ENCODE measurements at regions of chr1 and their contacts with region 1.

Region 1: GRCh38 chr1:156445789-156446263 is 54.7 kb downstream of the MEF2D start:
- DNase-seq: peak; percentile 92

Region 2: GRCh38 chr1:156245451-156246232 is 200.2 kb before region 1 on chr1:
- CTCF ChIA-PET with region 1: no interaction called
- POLR2A ChIA-PET with region 1: no interaction called
- DNase-seq: no peak

Region 3: DNA sequence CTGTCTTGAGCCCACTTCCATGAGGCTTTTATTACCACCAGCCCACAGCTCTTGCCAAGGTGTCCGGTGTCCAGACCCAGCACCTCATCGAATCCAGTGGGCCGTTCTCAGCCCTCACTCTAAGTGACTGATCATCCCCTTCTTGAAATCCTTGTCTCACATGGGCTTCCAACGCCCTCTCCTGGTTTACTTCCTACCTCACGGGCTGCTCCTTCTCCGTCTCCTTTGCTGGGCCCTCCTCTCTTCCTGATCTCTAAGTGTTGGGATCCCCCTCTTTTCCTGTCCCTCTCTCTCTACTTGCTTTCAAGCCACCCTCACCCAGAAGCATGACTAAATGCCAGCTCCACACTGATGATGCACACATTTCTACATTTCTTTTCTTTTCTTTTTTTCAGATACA is 85.9 kb before region 1 on chr1:
- CTCF ChIA-PET with region 1: interaction called, 12 read pairs
- POLR2A ChIA-PET with region 1: no interaction called
- DNase-seq: peak; percentile 73

Region 4: GRCh38 chr1:156388174-156389137 is 57.4 kb before region 1 on chr1:
- CTCF ChIA-PET with region 1: interaction called, 125 read pairs
- POLR2A ChIA-PET with region 1: interaction called, 5 read pairs
- DNase-seq: no peak